Right lobe of liver (tissue), 6 donors: ENCODE measurements at regions of chr2 and their contacts with region 1.

Region 1: DNA sequence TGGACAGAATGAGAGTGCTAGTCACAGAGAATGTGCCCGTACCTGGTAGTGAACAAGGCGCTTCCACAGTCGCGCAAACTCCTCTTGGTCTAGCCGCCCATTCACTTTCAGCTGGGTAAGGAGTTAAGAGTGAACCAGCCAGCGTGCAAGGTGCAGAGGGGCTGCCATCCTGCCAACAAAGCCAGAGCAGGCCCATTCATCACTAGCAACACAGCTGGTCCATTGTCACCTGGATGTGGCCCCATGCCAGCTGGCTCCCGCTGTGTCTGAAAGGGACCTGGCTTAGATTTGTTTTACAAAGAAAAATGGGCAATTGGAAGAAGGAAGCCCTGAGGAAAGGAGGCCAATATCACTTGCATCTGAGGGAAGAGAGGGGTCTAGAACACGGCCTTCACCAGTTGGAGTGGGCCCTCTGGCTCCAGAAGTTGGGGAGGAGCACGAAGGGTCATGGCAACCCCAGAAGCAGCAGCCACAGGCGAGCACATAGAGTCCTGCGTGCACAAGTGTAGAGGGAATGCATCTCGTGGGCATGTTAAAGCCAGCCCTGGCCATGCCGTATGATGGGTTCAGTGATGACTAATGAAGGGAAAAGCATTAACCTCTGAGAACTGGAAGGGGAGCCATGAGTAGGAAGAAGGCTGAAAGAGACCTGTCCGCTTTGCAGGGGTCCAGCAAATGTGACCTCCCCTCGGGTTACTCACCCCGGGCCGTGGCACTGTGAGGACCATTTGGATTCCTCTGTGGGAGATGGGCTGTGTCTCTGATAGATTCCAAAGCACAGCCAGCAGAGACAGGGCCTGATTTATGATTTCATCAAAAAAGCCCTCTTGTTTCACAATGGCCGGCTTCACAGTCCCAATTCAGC is 70.6 kb downstream of the CAPN13 start:
- DNase-seq: no peak
- ATAC-seq: no peak
- H3K4me3 ChIP-seq: no peak overlapping the region
- H3K27ac ChIP-seq: no peak overlapping the region
- H3K4me1 ChIP-seq: no peaks in the 10 kb centered on the region
- H3K27me3 ChIP-seq: no peaks in the 10 kb centered on the region
- CTCF ChIP-seq: no peak
- POLR2A ChIP-seq: no peak

Region 2: GRCh38 chr2:30862054-30862651 is 125.5 kb after region 1 on chr2:
- intact Hi-C with region 1: loop called in 1 of 2 experiments (anchors 10 kb)
- DNase-seq: peak in 2 of 3 donors; percentile 65 to 74
- ATAC-seq: peak; percentile 68 to 92 (median 80)
- H3K4me3 ChIP-seq: no peak overlapping the region
- H3K27ac ChIP-seq: no peak overlapping the region
- H3K4me1 ChIP-seq: no peaks in the 10 kb centered on the region
- H3K27me3 ChIP-seq: no peaks in the 10 kb centered on the region
- CTCF ChIP-seq: peak; percentile 31 to 78 (median 74)
- POLR2A ChIP-seq: no peak